AG04450 (cell line): ENCODE measurements at regions of chr17 and their contacts with region 1.

Region 1: DNA sequence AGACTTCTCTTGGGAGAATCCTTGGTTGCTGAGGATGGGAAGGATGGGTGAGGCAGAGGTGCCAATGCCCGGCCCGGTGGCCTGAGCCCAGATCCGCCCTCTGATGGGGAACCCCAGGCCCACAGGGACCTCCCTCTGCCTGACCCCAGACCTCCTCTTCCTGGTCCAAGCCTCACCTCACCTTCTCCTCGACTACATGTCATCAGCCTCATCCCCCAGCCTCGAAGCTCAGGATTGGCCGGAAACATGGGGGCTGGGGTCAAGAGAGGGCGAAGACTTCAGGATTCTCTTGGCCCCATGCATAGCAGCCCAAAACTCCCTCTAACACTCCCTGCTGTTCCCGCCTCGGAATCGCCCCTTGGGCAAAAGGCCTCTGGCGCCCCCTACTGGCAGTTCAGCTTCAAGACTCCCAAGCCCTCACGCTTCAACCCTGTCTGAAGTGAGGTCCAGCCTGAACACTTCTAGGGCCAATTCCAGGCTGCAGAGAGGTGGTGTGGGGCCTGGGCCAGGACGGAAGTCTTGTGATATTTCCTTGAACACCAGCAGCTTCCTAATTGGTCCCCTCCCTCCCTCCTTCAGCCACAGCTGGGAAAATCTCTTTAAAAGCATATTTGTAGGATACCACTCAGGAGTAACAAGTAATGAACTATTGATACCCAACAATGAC is 47.2 kb downstream of the ARHGAP27 start:
- DNase-seq: peak; percentile 53
- H3K4me3 ChIP-seq: no peak overlapping the region
- H3K27ac ChIP-seq: no peak overlapping the region
- H3K27me3 ChIP-seq: no peaks in the 10 kb centered on the region
- CTCF ChIP-seq: peak; percentile 99

Region 2: DNA sequence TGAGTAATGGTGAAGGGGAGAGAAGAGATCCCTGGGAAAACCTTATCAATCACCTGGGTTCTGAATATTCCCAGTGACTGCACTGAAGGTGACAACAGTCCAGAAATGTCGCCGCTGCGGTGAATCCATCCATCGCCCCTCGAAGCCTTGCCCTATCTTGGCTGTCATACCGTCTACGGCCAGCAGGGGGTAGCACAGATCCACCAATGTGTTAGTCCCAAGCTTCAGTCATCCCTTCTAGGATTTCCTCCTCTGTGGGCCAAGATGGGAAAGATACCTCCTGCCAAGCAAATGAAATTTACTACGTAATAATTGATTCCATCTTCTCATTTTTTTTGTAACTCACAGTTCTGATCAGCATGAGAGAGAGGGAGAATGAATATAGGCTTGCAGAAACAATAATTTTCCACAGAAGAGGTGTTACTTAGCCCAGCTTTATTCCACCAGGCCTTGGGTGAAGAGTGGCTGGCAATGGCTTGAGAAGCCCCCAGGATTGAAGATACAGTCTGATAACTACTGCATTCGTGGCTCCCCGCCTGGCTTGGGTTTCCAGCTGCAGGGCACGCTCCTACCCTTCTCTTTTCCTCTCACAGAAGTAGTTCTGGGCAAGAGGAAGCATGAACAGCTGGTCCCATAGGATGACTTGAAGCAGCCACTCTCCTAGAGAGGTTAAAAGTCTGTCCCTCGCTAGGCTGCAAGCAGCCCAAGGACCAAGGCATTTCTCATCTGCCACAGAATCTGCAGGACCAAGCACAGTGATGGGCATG is 166.4 kb before region 1 on chr17:
- CTCF ChIA-PET with region 1: interaction called, 35 read pairs
- POLR2A ChIA-PET with region 1: no interaction called
- DNase-seq: peak; percentile 61
- H3K4me3 ChIP-seq: peak overlapping the region; percentile 27; the same call in 1 of the 2 replicates
- H3K27ac ChIP-seq: no peak overlapping the region
- H3K27me3 ChIP-seq: peaks cover 24% of the 10 kb centered on the region
- CTCF ChIP-seq: peak; percentile 88

Region 3: DNA sequence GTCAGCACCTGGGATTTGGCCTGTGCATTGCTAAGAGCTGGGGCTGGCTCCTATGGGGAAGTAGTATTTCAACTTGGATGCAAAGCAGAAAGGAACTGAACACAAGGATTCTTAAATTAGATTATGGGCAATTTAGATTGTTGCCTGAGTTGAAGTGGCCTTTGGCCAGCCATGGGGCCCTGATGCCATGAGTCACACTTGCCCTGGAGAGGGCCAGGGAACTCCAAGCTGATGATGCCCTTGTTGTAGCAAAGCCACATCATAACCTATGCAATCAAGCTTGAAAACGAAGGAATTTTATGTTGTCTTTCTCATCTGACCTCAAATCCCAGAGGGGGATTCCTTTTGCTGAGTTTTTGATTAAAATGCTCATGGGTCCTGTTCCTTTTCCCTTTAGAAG is 119.6 kb before region 1 on chr17:
- CTCF ChIA-PET with region 1: interaction called, 11 read pairs
- POLR2A ChIA-PET with region 1: no interaction called
- DNase-seq: no peak
- H3K4me3 ChIP-seq: no peak overlapping the region
- H3K27ac ChIP-seq: peak overlapping the region; percentile 61
- H3K27me3 ChIP-seq: no peaks in the 10 kb centered on the region
- CTCF ChIP-seq: no peak

Region 4: DNA sequence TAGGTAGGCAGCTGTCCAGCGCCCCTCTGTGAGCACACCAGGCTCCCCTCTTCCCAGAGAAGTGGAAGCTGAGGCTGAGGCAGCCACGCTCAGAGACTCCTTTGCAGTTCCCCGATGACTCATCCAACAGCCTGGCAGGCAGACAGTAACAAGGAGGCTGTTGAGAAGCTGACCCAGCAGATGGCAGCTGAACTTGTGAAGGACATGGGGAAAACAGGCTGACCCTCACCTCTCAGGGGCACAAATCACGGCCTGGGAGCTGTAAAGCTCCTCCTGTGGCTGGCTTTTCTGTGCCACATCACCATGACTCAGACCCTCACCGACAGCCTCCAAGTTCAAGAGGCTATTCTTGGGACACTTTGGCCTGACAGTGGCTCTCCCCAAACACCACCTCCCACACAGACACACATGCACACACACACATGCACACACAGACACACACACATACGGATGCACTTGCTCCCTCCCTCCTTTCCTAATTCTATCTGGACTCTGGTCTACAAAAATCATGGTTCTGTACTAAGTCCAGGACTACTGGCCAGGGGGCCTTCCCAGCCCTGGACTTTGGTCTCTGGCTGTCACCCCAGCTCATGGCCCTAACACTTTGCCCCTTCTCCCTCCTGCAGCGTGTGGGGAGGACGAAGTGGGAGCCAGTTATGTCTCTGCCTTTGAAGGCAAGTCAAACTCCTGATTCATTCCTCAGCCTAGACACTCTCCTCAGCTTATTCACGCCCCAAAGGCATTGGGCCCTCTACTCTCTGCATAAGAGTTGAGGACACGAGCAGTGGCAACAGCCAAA is 91.9 kb before region 1 on chr17:
- CTCF ChIA-PET with region 1: interaction called, 30 read pairs
- POLR2A ChIA-PET with region 1: interaction called, 3 read pairs
- DNase-seq: peak; percentile 65
- H3K4me3 ChIP-seq: no peak overlapping the region
- H3K27ac ChIP-seq: peak overlapping the region; percentile 87
- H3K27me3 ChIP-seq: no peaks in the 10 kb centered on the region
- CTCF ChIP-seq: no peak; the same call in 1 of the 2 replicates

Region 5: DNA sequence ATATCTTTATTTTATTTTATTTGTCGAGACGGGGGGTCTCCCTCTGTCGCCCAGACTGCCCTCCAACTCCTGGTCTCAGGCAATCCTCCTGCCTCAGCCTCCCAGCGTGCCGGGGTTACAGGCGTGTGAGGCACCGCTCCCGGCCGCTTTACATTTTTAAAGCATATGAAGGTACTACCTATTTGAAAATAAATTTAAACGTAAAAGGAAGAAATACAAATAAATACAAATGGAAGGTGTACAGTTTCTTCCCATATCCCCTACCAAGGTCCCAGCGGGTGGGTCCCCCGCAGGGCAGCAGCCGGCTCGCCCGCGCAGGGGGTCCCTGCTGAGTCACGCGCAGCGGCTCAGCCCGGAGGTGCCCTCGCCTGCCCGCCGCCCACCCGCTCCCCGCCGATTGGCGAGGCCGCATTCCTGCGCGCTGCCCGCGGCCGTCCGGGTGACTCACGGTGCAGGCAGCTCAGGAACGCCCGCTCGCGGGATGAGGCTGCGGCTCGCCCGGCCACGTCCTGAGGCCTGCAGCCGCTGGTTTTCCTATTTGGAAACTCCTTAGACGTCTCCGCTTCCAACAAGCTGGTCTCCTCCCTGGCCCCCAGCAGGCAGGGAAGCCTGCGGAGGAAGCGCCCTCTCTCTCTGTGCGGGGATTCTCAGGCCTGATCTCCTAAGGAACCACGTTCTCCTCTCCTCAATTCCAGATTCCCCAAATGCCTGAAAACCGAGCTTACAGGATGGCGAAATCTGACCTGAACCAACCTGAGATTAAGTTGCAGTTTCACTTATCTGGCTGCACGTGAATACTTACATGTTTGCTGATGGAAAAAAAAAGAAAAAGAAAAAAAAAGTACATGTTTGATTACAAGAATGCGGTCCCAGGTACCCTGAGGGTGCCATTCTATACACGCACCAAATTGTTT is 13.8 kb before region 1 on chr17:
- CTCF ChIA-PET with region 1: interaction called, 45 read pairs
- POLR2A ChIA-PET with region 1: interaction called, 7 read pairs
- DNase-seq: peak; percentile 93
- H3K4me3 ChIP-seq: peak overlapping the region; percentile 29; the same call in 1 of the 2 replicates
- H3K27ac ChIP-seq: peak overlapping the region; percentile 100
- H3K27me3 ChIP-seq: no peaks in the 10 kb centered on the region
- CTCF ChIP-seq: peak; percentile 16